Naive thymus-derived CD4-positive, alpha-beta T cell (primary cell): ENCODE measurements at regions of chr9 and their contacts with region 1.

Region 1: GRCh38 chr9:121034529-121034928 is 15.5 kb downstream of the C5 start:
- DNase-seq: no peak
- ATAC-seq: no peak
- H3K4me3 ChIP-seq: no peak overlapping the region
- H3K4me3 Mint-ChIP-seq: no peak overlapping the region
- H3K27ac ChIP-seq: no peak overlapping the region
- H3K27ac Mint-ChIP-seq: no peak overlapping the region
- H3K4me1 ChIP-seq: no peaks in the 10 kb centered on the region
- H3K4me1 Mint-ChIP-seq: no peaks in the 10 kb centered on the region
- H3K27me3 ChIP-seq: no peaks in the 10 kb centered on the region
- H3K27me3 Mint-ChIP-seq: peaks cover 0 to 10% (median 0%) of the 10 kb centered on the region in 5 donors

Region 2: DNA sequence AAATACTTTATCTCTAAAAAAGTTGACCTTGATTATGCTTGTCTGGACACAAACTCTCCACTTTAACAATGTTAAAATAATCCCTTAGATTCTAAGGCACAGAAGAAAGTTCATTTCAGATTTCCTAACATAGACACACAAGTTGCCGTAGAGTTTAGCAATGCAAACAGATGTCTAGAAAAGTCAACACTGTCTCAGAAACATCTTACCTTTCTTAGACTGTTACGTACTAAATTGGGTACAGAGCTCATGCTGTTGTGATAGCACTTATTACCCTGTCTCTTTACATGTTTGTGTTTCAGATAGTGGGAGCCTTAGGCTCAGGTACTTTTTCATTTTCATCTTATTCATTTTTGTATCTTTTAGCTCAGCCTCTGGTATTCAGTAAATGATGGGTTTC is 36.4 kb before region 1 on chr9:
- CTCF ChIA-PET with region 1: no interaction called
- POLR2A ChIA-PET with region 1: no interaction called
- intact Hi-C with region 1: loop called in 1 of 2 experiments (anchors 5 kb)
- DNase-seq: no peak
- ATAC-seq: no peak
- H3K4me3 ChIP-seq: no peak overlapping the region
- H3K4me3 Mint-ChIP-seq: no peak overlapping the region
- H3K27ac ChIP-seq: no peak overlapping the region
- H3K27ac Mint-ChIP-seq: no peak overlapping the region
- H3K4me1 ChIP-seq: no peaks in the 10 kb centered on the region
- H3K4me1 Mint-ChIP-seq: no peaks in the 10 kb centered on the region
- H3K27me3 ChIP-seq: no peaks in the 10 kb centered on the region
- H3K27me3 Mint-ChIP-seq: peaks cover 0 to 6% (median 0%) of the 10 kb centered on the region in 5 donors